ENCODE measurements at regions of chr17 and their contacts with region 1.

Region 1: DNA sequence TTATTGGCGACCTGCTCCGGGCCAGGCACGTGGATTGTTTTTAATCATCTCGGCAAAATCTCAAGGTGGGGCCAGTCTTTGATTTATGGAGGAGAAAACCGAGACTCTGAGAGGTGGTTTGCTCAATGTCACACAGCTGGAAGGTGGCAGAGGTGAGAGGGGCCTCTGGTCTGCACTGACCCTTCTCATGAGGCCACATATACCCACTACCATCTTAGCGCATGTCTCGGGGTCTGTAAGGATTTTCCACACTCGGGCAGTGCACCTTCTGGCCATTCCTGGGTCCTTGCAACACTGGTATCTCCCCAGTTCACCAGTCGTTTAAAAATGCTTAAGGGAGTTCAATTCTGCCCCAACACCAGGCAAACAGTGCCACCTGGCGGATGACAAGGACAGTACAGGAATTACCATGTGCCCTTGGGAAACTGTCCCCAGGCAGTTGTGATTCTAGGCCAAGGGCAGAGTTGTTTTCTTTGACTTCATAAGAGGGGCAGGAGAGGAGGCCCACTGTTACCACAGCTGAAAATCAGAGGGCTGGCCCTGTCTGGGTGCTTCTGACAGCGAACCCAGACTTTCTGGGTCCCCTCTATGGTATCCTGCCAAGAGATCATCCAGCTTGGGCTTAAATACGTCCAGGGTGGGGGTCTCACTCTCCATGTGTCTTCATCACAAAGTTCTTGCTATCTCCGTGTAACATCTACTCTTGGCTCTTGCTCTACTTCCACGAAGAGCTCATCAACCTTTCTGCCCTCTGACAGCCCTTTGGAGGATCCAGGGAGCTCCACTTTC is 39.4 kb upstream of the RAI1 start:
- DNase-seq: peak in 2 of 3 donors; percentile 78 to 82
- ATAC-seq: peak; percentile 93
- H3K4me3 ChIP-seq: no peak overlapping the region
- H3K4me1 ChIP-seq: no peaks in the 10 kb centered on the region
- CTCF ChIP-seq: peak; percentile 74

Region 2: GRCh38 chr17:17356149-17356930 is 285.5 kb before region 1 on chr17:
- intact Hi-C with region 1: loop called (anchors 5 kb)
- DNase-seq: peak in 2 of 3 donors; percentile 82 to 84
- ATAC-seq: peak; percentile 91
- H3K4me3 ChIP-seq: no peak overlapping the region
- H3K4me1 ChIP-seq: no peaks in the 10 kb centered on the region
- CTCF ChIP-seq: peak; percentile 97

Region 3: DNA sequence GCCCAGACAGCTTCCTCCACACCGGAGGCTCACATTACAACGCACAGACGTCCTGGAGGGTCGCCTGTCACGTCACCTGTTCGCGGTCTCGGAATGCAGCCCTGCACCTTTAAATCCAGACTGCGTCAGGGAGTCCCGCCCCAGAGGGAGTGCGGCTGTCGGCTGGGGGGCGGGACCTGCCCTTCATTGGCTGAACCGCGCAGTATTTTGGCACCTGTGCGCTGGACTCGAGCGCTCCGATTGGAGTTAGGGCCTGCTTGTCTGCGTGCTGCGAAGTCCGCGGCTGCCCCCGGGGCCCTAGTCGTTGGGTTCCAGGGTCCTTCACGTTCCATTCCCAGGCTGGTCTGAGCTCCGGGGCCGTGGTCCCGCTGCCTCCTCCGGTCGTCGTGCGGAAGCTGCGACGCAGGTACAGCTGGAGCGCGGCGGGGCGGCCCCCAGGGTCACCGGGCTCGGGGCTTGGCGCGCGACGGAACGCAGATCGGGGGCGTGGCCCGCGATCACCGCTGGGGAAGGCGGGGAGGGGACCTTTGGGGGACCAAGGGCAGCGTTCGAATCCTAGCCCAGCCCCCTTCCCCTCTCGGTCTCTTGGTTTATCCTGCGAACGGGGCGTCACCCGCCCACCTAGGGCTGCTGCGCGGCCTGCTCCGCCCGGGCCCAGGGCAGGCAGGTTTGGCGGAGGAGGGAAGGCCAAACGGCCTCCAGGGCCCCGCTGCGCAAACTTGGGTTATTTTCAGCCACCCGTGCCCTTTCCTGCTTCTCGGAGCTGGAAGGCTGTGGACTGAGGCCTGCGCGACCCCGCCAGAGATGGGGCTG is 618.7 kb after region 1 on chr17 and contains the start of gene MIEF2:
- intact Hi-C with region 1: no loop called
- DNase-seq: peak; percentile 95 to 98 (median 96)
- ATAC-seq: peak; percentile 85
- H3K4me3 ChIP-seq: peak within 1 kb of the TSS; percentile 77
- H3K4me1 ChIP-seq: peaks cover 24% of the 10 kb centered on the region
- CTCF ChIP-seq: no peak
- total RNA-seq, gene MIEF2: 13.4 to 20.7 (median 16.4) TPM

Measured in mucosa of descending colon (tissue), 3 donors.